Cardiac septum (tissue), 1 donor: ENCODE measurements at regions of chr6 and their contacts with region 1.

Region 1: DNA sequence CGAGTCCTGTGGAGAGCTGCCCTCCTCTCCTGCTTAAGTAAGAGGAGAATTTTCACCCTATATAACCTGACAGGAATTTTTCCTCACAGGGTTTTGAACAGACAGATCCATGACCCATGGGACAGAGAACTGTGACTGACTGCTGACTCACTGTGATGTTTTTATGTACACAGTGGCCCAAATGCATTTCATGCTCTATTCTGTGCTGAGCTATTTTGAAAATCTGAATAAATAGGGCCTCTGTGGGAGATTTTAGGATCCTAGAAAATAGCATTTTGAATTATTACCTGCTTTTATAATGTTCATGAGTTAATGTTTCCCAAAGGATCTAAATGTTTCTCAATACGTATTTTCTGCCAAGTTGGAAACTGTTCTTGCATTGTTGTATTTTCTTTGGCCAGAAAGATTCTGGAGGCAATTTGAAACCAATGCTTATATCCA is 577.4 kb downstream of the HTR1B start:
- DNase-seq: no peak

Region 2: DNA sequence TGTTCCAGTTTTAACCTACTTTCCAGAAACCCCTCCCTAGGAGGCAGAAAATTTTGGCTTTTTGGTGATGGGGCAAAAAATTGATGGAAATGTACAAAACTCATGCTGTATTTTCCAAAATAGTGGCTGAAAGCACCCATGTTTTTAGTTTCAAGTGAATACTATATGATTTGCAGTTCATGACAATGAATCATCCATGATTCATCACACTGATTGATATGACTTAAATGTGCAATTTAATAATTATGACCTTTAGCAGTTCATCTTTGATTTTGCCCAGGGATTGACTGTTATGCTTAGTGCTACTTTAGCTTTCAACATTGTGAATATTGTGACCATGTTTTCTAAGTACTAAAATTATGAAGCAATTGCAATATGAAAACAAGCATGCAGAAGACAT is 98.7 kb after region 1 on chr6:
- intact Hi-C with region 1: no loop called
- DNase-seq: no peak

Region 3: GRCh38 chr6:77457720-77458349 is 572.0 kb after region 1 on chr6:
- intact Hi-C with region 1: loop called (anchors 10 kb)
- DNase-seq: no peak